Motor neuron (in vitro differentiated cells): ENCODE measurements at regions of chr1 and their contacts with region 1.

Region 1: DNA sequence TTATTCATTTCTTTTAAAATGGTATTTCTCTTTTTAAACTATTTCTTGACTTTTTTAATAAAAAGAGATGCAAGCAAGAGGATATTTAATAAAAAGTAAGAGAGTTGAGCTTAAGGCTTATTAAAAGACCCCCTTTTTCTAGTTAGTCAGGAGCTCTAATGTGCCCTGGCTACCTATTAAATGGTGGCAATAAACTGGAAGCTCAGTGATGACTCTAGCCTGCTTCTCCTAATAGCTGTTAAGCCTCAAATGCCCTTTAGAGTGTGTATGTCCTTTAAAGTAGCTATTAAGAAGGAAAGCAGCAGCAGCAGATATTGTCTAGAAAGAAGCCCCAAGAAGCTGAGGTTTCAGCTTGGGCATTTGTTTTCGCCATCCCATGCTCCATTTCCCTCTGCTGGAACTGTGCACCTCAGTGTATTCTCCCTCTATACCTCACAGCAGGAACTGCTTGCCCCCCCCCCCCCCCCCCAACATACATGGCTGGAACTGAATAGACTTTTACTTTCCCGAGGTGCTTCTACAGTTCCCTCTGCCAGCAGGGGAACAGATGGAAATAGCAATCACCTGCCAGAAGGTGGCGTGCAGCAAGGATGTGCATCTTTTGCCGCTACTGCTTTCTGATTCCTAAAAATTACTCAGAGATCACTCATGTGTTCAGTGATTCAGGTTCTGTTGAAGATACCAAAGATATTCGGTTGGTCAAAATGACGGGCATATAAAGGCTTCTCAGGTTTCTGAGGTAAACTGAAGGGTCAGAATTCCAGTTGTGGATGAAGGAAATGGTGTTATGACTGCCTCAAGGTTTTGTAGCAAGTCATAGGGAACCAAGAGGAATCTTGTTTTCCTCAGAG is 2.5 kb downstream of the RGS4 start:
- ATAC-seq: peak in 6 of 8 experiments; percentile 10 to 72 (median 20)
- H3K4me3 ChIP-seq: peak overlapping the region in 3 of 5 donors; percentile 7 to 28 (median 27)
- H3K27ac ChIP-seq: no peak overlapping the region
- H3K4me1 ChIP-seq: peaks cover 4 to 20% of the 10 kb centered on the region in 2 donors

Region 2: DNA sequence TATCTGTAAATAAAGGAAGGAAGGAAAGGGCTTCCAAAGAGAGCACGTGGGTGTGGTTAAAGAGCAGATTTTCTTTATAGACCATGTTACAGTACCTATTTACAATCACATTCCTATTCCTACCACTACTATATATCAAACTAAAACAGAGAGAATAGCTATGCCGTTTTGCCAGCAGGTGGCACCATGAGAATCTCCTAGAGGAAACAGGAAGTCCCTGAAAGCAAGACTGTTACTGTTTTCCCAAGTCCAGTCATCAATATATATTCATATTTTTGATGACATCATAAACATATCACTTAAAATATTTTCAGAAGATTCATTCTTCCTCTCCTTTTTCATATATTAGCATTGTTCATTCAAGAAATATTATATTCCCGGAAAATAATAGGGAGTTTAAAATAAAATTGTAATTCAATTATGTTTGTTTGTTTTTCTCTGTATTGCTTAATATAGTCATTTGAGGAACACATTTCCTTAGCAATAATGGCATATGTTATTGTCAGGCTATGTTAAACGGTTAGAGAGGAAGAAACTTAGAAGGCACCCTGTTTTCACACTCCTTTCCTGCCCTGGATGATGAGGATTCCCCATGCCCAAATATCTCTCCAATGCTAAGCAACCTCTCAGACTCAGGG is 217.3 kb before region 1 on chr1:
- in situ Hi-C with region 1: loop called in 3 of 9 experiments (anchors 25 kb)
- ATAC-seq: peak; percentile 48 to 97 (median 68)
- H3K4me3 ChIP-seq: no peak overlapping the region
- H3K27ac ChIP-seq: no peak overlapping the region
- H3K4me1 ChIP-seq: no peaks in the 10 kb centered on the region

Region 3: GRCh38 chr1:162878000-162878596 is 193.5 kb before region 1 on chr1:
- in situ Hi-C with region 1: loop called in 4 of 9 experiments (anchors 10 to 25 kb)
- ATAC-seq: peak; percentile 29 to 78 (median 58)
- H3K4me3 ChIP-seq: no peak overlapping the region
- H3K27ac ChIP-seq: no peak overlapping the region
- H3K4me1 ChIP-seq: peaks cover 0 to 7% of the 10 kb centered on the region in 2 donors

Region 4: DNA sequence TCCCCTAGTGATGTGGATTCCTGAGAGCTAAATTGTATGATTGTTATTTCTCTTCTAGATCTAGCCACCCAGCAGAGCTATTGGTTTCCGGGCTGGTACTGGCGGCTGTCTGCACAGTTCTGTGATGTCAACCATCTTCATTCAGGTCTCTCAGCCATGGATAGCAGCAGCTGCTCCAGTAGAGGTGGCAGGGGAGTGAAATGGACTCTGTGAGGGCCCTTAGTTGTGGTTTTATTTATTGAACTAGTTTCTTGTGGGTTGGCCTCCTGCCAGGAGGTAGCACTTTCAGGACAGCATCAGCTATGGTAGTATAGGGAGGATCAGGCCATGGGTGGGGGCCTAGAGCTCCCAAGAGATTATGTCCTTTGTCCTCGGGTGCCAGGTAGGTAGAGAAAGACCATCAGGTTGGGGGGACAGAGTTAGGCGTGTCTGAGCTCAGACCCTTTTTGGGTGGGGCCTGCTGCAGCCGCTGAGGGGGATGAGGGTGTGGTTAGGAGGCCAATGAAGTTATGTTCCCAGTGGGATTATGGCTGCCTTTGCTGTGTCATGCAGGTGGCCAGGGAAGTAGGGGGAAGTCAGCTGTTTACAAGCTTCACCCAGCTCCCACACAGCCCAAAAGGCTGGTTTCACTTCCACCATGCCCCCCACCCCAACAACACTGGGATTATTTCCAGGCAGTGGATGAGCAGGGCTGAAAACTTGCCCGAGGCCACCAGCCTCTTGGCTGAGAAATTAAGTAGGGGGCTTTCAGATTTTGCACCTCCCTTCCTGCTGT is 57.6 kb before region 1 on chr1:
- in situ Hi-C with region 1: no loop called
- ATAC-seq: no peak
- H3K4me3 ChIP-seq: no peak overlapping the region
- H3K27ac ChIP-seq: no peak overlapping the region
- H3K4me1 ChIP-seq: no peaks in the 10 kb centered on the region